GM23248 (cell line): ENCODE measurements at regions of chr13 and their contacts with region 1.

Region 1: GRCh38 chr13:23915308-23915707 is 18.0 kb upstream of the C1QTNF9B start:
- DNase-seq: no peak
- H3K4me3 ChIP-seq: no peak overlapping the region
- H3K27ac ChIP-seq: no peak overlapping the region
- H3K4me1 ChIP-seq: peaks cover 8% of the 10 kb centered on the region; the same call in 1 of the 2 replicates
- H3K27me3 ChIP-seq: no peaks in the 10 kb centered on the region

Region 2: DNA sequence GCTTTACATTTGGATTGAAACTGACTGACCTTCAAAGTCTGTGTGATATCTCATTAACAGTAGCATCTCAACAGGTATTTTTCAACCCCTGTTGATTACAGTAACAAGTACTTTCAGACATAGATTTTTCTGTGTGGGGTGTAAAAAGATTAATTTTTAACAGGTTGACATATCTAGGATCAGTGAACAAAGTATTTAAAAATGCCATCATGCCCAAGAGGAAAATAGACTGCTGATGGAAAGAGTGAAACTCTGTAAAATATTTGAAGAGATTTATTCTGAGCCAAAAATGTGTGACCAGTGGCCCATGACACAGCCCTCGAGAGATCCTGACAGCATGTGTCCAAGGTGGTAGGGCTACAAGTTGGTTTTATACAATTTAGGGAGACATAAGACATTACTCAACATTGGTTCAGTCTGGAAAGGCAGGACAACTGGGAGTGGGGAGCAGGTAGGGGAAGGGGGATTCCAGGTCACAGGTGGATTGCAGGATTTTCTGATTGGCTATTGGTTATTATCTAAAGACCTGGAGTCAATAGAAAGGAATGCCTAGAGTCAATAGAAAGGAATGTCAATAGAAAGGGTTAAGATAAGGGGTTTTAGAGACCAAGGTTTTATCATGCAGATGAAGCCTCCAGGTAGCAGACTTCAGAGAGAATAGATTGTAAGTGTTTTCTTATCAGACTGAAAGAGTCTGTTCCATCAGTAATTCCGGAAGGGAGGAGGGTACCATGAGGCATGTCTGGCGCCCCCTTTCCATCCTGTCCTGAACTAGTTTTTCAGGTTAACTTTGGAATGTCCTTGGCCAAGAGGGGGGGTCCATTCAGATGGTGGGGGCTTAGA is 316.0 kb before region 1 on chr13:
- in situ Hi-C with region 1: no loop called
- DNase-seq: no peak
- H3K4me3 ChIP-seq: no peak overlapping the region
- H3K27ac ChIP-seq: no peak overlapping the region
- H3K4me1 ChIP-seq: 0 out of 2 replicates have a peak, but pooled peaks cover 7% of the 10 kb centered on the region
- H3K27me3 ChIP-seq: no peaks in the 10 kb centered on the region

Region 3: GRCh38 chr13:24233351-24233901 is 318.1 kb after region 1 on chr13:
- in situ Hi-C with region 1: loop called (anchors 10 kb)
- DNase-seq: peak; percentile 63
- H3K4me3 ChIP-seq: peak overlapping the region; percentile 68
- H3K27ac ChIP-seq: peak overlapping the region; percentile 41
- H3K4me1 ChIP-seq: peaks cover 12% of the 10 kb centered on the region; the same call in 1 of the 2 replicates
- H3K27me3 ChIP-seq: no peaks in the 10 kb centered on the region